CD4-positive, alpha-beta T cell (primary cell): ENCODE measurements at regions of chr12 and their contacts with region 1.

Region 1: DNA sequence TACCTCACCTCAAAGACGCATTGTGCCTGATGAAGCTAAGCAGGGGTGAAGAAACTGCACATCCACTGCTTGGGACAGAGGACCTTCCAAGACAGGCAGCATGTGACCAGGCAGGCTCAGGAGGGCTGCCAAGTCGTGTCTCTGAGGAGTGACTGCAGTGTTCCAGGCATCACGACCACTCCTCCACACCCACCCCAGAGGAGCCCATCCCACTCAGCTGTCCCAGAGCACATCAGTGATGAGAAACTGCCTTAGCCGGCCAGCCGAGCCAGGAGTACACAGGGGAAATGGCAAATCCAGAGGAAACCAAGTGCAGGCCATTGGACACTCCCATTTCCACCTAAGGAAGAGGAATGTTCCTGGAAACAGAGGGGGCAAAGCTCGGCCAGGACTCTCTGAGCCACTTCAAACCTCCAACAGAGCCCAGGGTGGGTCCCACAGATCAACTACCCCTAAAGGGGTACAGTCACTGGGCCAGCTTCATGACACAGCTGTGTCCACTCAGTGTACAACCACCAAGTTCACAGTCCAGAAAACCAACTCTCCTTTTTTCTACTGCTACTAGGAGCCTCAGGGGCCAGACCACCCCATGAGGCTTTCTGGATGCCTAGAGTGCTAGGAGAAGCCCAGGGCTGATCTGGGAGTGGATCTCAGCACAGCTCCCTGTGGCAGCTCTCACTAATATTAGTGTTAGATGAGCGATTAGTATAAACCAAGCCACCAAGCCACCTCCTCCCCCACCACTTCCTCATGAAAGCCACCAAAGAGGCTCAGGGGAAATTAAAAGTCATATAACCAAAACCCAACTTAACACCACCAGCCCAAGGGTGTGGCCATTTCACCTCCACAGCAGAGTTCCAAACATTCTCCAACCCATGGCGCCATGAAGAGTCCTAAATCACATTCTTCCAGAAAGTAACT is 15.4 kb downstream of the PXN start:
- DNase-seq: peak in 6 of 14 experiments; percentile 20 to 85 (median 55)
- ATAC-seq: no peak
- H3K4me3 ChIP-seq: peak overlapping the region; percentile 40
- H3K4me3 Mint-ChIP-seq: peak overlapping the region; percentile 72
- H3K27ac ChIP-seq: peak overlapping the region; percentile 35 to 59
- H3K27ac Mint-ChIP-seq: peak overlapping the region; percentile 95
- H3K4me1 ChIP-seq: peaks cover 84% of the 10 kb centered on the region
- H3K4me1 Mint-ChIP-seq: peaks cover 85% of the 10 kb centered on the region
- H3K27me3 ChIP-seq: no peaks in the 10 kb centered on the region
- H3K27me3 Mint-ChIP-seq: no peaks in the 10 kb centered on the region
- CTCF ChIP-seq: no peak

Region 2: DNA sequence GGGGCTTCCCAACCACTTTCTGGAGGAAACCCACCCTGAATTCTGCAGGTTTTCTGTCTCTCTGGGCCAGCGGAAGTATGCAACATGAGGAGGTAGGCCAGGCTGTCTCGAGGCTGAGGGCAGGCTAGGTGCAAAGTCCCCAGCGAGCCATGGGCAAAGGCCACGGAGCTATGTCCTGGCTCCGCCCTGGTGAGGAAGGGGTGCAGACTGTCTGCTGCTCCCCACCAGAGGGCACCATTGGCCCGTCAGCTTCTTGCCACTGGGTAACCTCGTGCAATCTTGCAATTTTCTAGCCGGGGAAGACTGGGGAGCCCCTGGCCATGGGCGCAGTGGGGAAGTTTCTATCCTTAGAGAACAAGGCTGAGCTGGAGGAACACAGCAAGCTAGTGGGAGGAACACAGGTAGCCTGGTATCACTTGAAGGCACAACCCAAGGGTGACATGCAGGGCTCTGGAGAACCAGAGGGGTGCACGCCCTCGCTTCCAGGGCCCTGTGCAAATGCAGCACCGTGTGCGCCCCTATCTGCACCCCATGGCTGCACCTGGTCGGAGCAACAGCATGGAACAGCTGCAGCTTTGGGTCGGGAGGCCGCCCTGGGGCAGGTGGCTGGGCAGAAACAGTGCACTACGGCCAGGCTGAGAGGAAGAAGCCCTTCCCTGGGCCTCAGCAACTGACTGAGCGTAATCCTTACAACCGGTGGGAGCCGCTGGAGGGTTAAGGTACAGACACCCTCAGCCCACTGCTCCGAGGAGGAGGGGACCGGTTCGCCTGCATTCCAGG is 21.7 kb before region 1 on chr12:
- CTCF ChIA-PET with region 1: interaction called, 33 read pairs
- POLR2A ChIA-PET with region 1: interaction called, 152 read pairs
- intact Hi-C with region 1: loop called (anchors 1 to 2 kb)
- DNase-seq: peak; percentile 83 to 94 (median 88)
- ATAC-seq: peak; percentile 69
- H3K4me3 ChIP-seq: peak overlapping the region; percentile 28
- H3K4me3 Mint-ChIP-seq: peak overlapping the region; percentile 65
- H3K27ac ChIP-seq: peak overlapping the region in 1 of 2 donors; percentile 26
- H3K27ac Mint-ChIP-seq: peak overlapping the region; percentile 70
- H3K4me1 ChIP-seq: peaks cover 95% of the 10 kb centered on the region
- H3K4me1 Mint-ChIP-seq: peaks cover 91% of the 10 kb centered on the region
- H3K27me3 ChIP-seq: no peaks in the 10 kb centered on the region
- H3K27me3 Mint-ChIP-seq: no peaks in the 10 kb centered on the region
- CTCF ChIP-seq: peak; percentile 93

Region 3: DNA sequence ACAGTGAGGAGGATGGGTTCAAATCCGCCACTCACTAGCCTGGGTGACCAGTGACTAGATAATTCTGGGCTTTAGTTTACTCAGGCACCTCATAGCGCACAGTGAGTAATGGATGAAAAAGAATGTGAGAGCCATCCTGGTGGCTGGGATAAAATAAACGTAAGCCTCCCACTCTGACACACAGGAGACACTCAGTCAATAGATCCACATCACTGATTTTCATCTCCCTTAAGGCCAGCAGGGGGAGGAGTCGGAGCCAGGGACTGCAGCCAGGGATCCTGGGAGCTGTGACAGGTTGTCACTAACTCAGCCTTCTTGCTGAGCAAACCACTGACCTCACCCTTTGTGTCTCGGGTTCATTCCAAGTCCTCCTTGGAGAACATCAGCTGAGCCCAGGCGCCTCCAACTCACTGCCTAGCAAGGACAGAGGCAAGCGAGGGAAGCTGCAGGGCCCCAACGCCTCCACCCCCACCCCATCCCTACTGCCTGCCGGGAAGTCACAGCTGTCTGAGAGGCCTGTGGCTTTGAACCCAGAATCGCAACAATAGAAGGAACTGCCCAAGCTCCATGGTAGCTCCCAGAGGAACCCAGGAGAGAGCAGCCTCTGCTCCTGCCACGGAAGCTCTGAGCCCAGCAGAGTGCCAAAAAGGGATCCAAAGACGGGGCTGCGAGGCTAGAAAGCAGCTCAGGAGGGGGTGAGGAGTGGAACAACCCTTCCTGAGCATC is 15.3 kb before region 1 on chr12:
- CTCF ChIA-PET with region 1: interaction called, 33 read pairs
- POLR2A ChIA-PET with region 1: interaction called, 152 read pairs
- intact Hi-C with region 1: loop called in 1 of 2 experiments (anchors 1 kb)
- DNase-seq: peak in 2 of 14 experiments; percentile 39 to 56
- ATAC-seq: no peak
- H3K4me3 ChIP-seq: no peak overlapping the region
- H3K4me3 Mint-ChIP-seq: no peak overlapping the region
- H3K27ac ChIP-seq: no peak overlapping the region
- H3K27ac Mint-ChIP-seq: peak overlapping the region; percentile 88
- H3K4me1 ChIP-seq: peaks cover 99% of the 10 kb centered on the region
- H3K4me1 Mint-ChIP-seq: peaks cover 85% of the 10 kb centered on the region
- H3K27me3 ChIP-seq: no peaks in the 10 kb centered on the region
- H3K27me3 Mint-ChIP-seq: no peaks in the 10 kb centered on the region
- CTCF ChIP-seq: no peak